Cardiac septum (tissue), 1 donor: ENCODE measurements at regions of chr7 and their contacts with region 1.

Region 1: GRCh38 chr7:100691676-100692577 is 2.1 kb downstream of the GIGYF1 start:
- DNase-seq: peak; percentile 90

Region 2: DNA sequence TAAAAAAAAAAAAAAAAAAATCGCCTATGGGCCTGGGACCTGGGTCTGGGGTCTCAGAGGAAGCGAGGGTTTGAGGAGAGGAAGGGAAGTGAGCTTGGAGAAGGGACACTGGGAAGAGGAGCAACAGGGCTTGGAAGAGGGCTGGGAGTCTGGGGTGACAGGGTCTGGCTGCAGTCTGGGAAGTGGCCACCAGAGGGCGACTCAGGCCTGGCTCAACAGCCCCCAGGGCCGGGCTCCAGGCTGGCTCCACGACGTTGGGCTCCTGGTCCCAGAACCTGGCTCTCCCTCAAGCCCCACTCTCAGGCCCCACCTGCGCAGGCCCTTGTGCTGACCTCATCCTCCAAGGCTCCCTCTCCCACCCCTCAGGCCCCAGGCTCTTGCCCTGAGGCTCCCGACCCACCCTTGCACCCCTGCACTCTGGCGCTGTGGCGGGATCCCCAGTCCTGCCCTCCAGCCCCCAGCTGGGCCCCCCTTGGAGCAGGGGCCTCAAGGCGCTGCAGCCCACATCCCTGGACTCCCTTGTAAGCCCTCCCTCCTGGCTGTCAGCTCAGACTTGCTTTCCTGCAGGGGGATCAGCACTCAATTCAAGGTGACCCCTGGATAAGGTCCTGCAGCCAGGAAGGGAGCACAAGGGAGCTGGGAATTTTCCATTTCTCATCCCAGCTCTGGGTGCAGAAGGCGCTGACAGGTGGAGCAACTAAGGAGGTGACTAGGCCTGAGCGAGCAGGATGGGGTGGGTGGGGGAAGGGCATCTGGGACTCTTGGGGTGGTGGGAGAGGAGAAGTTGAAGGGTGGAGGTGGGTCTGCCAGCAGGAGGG is 222.5 kb before region 1 on chr7:
- intact Hi-C with region 1: loop called (anchors 5 kb)
- DNase-seq: peak; percentile 94

Region 3: GRCh38 chr7:100563809-100564400 is 128.0 kb before region 1 on chr7:
- intact Hi-C with region 1: loop called (anchors 1 kb)
- DNase-seq: peak; percentile 91

Region 4: GRCh38 chr7:100586266-100587025 is 105.5 kb before region 1 on chr7 and contains the start of gene FBXO24:
- intact Hi-C with region 1: loop called (anchors 5 kb)
- DNase-seq: peak; percentile 100
- total RNA-seq, gene FBXO24: 0.40 TPM

Region 5: DNA sequence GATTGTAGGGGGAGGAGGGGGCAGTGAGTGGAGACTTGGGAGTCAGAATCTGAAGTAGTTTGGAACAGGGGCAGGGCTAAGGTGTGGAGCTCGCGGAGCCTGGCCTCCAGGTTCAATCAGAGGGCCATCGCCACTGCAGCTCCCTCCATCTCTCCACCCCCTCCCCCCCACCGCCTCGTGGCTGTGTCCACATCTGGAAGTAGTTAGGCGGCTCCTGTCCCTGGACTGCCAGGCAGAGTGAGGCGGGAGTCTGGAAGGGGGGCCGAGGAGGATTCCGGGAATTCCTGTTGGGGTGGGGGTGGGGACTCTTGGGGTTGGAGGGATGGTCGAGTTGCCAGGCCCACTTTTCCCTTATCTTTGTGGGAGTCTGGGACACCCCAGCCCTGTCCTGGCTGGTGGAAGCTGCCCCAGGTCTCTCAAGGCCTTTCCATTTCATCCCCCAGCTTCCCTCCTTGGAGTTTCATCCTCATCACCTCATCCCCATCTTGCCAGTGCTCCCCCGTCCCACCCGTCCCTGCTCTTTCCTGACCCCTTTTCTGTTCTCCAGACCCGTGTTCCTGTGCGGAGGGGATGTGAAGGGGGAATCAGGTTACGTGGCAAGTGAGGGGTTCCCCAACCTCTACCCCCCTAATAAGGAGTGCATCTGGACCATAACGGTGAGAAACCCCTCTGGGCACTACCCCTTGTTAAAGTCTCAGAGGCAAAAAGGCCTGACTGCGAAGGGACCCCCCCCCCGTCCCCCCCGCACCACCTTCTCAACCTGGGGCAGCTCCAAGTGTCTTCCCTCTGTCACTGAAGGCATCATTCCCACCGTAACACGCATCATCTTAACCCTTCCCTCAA is 88.8 kb before region 1 on chr7:
- intact Hi-C with region 1: loop called (anchors 5 kb)
- DNase-seq: no peak

Region 6: DNA sequence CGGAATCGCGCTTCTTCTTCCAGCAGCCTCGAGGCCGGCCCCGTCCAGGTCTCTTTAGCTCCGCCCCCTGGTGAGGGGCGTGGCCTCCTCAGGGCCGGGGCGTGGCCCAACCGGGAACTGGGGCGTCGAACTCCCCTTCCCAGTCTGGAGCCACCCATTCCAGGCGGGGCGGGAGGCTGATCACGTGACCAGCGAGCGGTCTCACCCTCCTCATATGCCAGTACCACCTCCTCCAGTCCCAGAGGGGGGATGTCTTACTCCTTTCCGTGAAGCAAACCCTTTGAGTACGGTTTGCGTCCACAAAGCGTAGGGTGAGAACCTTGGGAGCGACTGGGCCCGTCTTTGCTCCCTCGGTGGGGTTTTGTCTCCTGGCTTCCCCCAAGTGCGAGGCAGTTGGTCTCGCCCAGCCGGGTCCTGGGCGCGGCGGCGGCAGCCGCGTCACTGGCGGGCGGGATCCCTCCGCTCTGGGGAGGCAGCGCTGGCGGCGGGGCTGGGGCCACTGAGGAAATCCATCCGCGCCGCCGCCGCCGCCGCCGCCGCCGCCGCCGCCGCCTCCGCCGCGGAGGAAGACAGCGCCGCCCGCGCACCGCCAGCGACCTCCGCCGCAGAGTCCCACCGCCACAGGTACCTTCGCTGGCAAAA is 18.5 kb before region 1 on chr7 and contains the start of gene GNB2:
- intact Hi-C with region 1: loop called (anchors 2 kb)
- DNase-seq: peak; percentile 100
- total RNA-seq, gene GNB2: 123 TPM

Region 7: DNA sequence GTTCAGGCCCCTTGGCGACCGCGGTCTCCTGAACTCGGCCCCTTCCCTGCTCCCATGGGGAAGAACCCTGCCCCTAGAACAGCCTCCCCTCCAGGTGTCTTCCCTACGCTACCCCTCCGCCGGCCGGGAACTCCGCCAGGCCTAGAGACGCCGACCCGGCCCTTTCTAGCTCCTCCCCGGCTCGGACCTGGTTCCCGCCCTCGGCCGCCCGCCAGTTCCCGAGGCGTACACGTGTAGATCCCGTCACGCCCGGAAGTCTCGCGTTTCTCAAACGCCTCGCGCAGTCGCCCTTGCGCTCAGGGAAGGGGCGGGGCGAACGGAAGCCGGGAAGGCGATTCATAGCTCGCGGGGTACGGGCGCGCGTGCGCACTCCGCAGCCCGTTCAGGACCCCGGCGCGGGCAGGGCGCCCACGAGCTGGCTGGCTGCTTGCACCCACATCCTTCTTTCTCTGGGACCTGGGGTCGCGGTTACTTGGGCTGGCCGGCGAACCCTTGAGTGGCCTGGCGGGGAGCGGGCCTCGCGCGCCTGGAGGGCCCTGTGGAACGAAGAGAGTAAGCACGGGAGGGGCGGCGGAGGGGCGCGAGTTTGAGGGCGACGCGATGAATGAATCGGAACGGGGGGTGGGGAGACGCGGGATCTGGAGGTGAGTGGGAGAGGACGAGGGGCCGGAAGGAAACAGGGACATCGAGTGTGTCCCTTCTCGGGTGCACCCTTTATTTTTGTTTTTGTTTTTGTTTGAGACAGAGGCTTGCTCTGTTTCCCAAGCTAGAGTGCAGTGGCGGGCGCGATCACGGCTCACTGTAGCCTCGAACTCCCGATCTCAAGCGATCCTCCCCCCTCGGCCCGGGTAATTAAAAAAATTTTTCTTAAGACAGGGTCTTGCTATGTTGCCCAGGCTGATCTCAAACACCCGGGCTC is 14.1 kb after region 1 on chr7 and contains the start of gene POP7:
- intact Hi-C with region 1: no loop called
- DNase-seq: peak; percentile 99
- total RNA-seq, gene POP7: 25.1 TPM

Region 8: DNA sequence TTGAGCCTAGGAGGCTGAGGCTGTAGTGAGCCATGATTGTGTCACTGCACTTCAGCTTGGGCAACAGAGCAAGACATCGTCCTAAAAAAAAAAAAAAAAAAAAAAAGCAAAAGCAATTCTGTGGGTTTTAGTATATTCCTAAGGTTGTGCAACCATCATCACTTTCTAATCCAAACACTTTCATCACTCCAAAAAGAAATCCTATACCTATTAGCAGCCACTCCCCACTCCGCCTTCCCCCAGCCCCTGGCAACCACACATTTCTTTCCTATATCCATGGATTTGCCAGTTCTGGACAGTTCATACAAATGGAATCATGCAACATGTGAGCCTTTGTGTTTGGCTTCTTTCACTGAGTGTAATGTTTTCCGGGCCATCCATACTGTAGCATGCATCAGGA is 61.8 kb after region 1 on chr7:
- intact Hi-C with region 1: no loop called
- DNase-seq: no peak

Region 9: DNA sequence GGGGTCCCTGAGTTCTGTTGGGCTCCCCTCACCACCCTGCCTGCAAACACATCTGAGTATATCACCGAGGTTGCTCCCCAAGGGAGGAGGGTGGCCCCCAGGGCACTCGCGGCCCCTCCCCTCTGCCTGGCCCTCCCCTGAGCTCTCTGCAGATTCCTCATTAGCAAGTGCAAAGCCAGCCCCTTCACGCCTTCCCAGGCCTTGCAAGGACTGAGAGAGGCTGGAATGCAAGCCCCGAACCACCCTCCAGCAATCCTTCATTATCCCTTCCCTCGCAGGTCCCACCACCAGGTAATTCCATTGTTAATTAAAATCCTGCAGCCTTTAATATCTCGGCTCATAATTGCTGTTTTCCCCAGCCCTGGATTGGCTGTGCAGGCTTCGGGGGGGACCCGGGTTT is 972.5 kb after region 1 on chr7:
- intact Hi-C with region 1: no loop called
- DNase-seq: no peak